Activated T-helper 1 cell treated with anti-CD3 and anti-CD28 coated beads, Interleukin-12 subunit alpha, Interleukin-12 subunit beta, Interleukin-2, Interleukin-4 antibody, amounts not matched to agents 30 ng/mL and 10 ng/mL and 1 ng/mL, durations not matched to agents 14 hours and 24 hours and 36 hours (primary cell): ENCODE measurements at regions of chr9 and their contacts with region 1.

Region 1: GRCh38 chr9:5988265-5988664 is 27.2 kb downstream of the RANBP6 start:
- DNase-seq: no peak
- H3K4me3 Mint-ChIP-seq: no peak overlapping the region
- H3K27ac Mint-ChIP-seq: no peak overlapping the region
- H3K4me1 Mint-ChIP-seq: peaks cover 4% of the 10 kb centered on the region
- H3K27me3 Mint-ChIP-seq: no peaks in the 10 kb centered on the region

Region 2: DNA sequence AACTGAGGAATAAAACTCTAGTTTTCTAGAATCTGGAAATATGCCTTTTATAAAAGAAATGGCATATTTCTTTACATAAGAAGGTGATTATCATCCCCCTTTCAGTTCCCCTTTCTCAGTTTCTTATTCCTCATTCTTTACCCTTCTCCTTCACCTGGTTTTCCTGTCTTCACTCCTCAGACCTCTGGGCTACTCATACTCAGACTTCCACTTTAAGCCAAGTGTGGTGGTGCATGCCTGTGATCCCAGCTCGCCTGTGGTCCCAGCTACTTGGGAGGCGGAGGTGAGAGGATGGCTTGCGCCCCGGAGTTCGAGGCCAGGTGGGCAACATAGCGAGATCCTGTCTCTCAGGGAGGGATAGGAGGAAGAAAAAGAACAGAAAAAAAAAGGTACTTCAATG is 30.0 kb before region 1 on chr9:
- intact Hi-C with region 1: no loop called
- DNase-seq: no peak
- H3K4me3 Mint-ChIP-seq: no peak overlapping the region
- H3K27ac Mint-ChIP-seq: no peak overlapping the region
- H3K4me1 Mint-ChIP-seq: peaks cover 3% of the 10 kb centered on the region
- H3K27me3 Mint-ChIP-seq: no peaks in the 10 kb centered on the region

Region 3: GRCh38 chr9:5971740-5972139 is 16.5 kb before region 1 on chr9:
- intact Hi-C with region 1: loop called (anchors 2 kb)
- DNase-seq: no peak
- H3K4me3 Mint-ChIP-seq: no peak overlapping the region
- H3K27ac Mint-ChIP-seq: peak overlapping the region; percentile 36
- H3K4me1 Mint-ChIP-seq: peaks cover 18% of the 10 kb centered on the region
- H3K27me3 Mint-ChIP-seq: no peaks in the 10 kb centered on the region

Region 4: DNA sequence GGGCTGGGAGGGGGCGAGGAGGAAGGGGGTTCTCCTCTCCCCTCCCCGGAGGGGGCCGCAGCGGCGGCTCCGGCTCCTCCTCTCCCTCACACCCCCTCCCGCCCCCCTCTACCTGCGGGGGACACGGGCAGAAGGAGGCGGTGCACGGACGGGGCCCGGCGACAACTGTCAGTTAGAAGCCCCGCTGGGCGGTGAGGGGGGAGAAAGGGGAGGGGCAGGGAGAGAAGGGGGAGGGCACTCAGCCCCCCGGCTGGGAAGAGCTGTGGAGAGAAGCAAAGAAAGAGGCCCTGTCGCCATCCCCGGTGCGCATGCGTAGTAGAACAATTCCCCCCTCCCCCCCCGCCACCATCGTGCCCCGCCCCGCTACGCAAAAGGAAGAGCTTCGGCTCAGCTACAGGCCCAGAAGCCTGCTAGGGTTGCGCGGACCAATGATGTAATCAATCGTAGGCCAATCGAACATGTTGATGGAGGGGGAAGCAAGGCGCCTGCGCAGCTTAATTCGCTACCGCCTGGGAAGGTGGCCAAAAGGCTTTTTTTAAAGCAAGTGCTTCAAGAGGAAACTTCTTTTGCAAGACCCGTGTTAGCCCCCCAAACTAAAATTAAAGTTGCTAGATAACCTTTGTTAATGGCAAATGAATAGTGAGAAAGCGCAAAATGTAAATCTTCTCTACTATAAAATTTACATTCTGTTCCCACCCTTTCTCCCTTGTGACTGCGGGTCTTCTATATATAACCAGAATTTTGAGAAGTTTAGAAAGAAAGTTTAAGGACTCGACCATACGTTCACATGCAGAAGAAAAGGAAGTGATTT is 20.1 kb after region 1 on chr9:
- intact Hi-C with region 1: no loop called
- DNase-seq: peak; percentile 91
- H3K4me3 Mint-ChIP-seq: peak overlapping the region; percentile 73
- H3K27ac Mint-ChIP-seq: peak overlapping the region; percentile 65
- H3K4me1 Mint-ChIP-seq: peaks cover 62% of the 10 kb centered on the region
- H3K27me3 Mint-ChIP-seq: no peaks in the 10 kb centered on the region